Sciatic nerve (tissue), 2 donors: ENCODE measurements at regions of chr11 and their contacts with region 1.

Region 1: DNA sequence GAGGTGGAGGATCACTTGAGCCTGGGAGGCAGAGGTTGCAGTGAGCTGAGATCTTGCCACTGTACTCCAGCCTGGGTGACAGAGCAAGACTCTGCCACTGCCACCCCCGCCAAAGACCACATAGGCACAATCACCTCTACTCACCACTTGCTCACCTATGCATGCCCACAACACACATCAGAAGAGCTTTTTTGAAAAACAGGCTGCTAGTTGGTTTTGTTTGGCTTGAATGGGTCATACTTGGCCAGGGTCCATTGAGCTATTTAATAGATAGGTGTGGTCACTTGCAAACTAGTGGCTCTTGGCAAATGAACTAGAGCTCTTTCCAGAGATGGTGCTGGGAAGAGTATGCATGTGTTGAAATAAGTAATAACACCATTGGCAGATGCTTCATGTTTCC is 80.1 kb downstream of the EMSY start:
- DNase-seq: no peak
- ATAC-seq: peak; percentile 69

Region 2: GRCh38 chr11:76506833-76507232 is 18.1 kb before region 1 on chr11:
- intact Hi-C with region 1: loop called (anchors 1 kb)
- DNase-seq: no peak
- ATAC-seq: no peak

Region 3: GRCh38 chr11:76566831-76567230 is 41.9 kb after region 1 on chr11:
- intact Hi-C with region 1: no loop called
- DNase-seq: no peak
- ATAC-seq: no peak